ENCODE measurements at regions of chrX and their contacts with region 1.

Region 1: GRCh38 chrX:102950908-102951866 is 14.1 kb downstream of the RAB40AL start:
- DNase-seq: peak; percentile 69
- ATAC-seq: peak; percentile 61
- H3K4me3 Mint-ChIP-seq: peak overlapping the region; percentile 59
- H3K27ac Mint-ChIP-seq: no peak overlapping the region
- H3K4me1 Mint-ChIP-seq: peaks cover 4% of the 10 kb centered on the region
- H3K27me3 Mint-ChIP-seq: peaks cover 4% of the 10 kb centered on the region

Region 2: GRCh38 chrX:102498732-102499131 is 452.5 kb before region 1 on chrX:
- CTCF ChIA-PET with region 1: no interaction called
- POLR2A ChIA-PET with region 1: no interaction called
- intact Hi-C with region 1: no loop called
- DNase-seq: no peak
- ATAC-seq: no peak
- H3K4me3 Mint-ChIP-seq: no peak overlapping the region
- H3K27ac Mint-ChIP-seq: no peak overlapping the region
- H3K4me1 Mint-ChIP-seq: no peaks in the 10 kb centered on the region
- H3K27me3 Mint-ChIP-seq: no peaks in the 10 kb centered on the region

Region 3: DNA sequence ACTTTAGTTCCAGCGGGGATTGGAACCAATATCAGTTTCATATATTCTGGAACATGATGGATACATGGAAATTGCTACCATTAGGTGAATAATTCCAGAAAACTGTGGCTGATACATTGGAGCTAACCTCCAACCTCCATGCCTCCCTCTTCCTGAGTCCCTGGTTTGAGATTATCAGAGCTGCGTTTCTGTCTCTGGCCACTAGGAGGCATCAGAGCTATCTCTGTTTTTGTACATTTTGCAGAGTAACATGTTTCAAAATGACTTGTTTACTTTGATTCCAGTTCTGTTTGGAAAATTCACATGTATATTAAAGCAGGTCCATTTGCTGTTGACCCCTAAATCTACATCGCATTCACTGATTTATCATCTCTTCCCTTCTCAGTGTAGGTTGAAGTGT is 16.6 kb before region 1 on chrX:
- CTCF ChIA-PET with region 1: interaction called, 19 read pairs
- POLR2A ChIA-PET with region 1: no interaction called
- intact Hi-C with region 1: no loop called
- DNase-seq: peak; percentile 51
- ATAC-seq: no peak
- H3K4me3 Mint-ChIP-seq: no peak overlapping the region
- H3K27ac Mint-ChIP-seq: no peak overlapping the region
- H3K4me1 Mint-ChIP-seq: no peaks in the 10 kb centered on the region
- H3K27me3 Mint-ChIP-seq: no peaks in the 10 kb centered on the region

Region 4: DNA sequence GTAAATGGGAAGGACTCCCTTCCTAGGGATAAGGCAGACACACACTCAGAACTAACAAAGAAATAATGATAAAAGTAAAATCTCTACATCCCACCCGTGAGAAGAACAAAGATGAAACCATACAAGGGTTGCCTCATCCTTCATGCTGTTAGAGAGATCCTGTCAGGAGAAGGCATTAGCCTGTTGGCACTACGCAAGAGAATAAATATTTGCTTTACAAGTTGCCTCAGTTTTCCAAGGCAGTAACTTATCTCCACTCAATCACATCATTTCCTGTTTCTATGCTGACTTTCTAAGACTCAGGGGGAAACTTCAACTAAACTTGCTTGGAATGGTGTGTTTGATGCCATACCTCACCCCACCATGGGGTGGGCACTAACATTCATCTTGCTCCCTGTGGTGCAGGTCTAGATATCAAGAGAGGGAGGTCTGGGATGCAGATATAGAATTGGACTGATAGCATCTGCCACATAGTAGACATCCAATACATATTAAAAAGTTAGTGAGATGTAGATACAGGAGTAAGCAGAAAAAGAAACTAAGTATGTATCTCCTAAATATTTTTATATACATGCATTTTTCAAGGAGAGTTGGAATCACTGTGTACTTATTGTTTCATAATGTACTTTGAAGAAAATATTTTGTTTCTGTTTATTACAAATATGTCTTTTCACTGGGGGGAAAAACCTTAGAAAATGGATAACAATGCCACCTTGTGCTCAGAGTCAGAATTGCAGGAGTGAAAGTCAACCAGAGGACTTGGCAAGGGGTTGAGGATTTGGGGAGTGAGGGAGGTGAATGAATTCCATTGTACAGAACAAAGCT is 206.5 kb after region 1 on chrX:
- CTCF ChIA-PET with region 1: no interaction called
- POLR2A ChIA-PET with region 1: no interaction called
- intact Hi-C with region 1: loop called in 1 of 2 experiments (anchors 1 kb)
- DNase-seq: peak; percentile 22
- ATAC-seq: no peak
- H3K4me3 Mint-ChIP-seq: no peak overlapping the region
- H3K27ac Mint-ChIP-seq: no peak overlapping the region
- H3K4me1 Mint-ChIP-seq: no peaks in the 10 kb centered on the region
- H3K27me3 Mint-ChIP-seq: no peaks in the 10 kb centered on the region

Region 5: GRCh38 chrX:103175944-103176753 is 225.0 kb after region 1 on chrX:
- CTCF ChIA-PET with region 1: interaction called, 28 read pairs
- POLR2A ChIA-PET with region 1: no interaction called
- intact Hi-C with region 1: loop called (anchors 1 kb)
- DNase-seq: peak; percentile 69
- ATAC-seq: peak; percentile 58
- H3K4me3 Mint-ChIP-seq: peak overlapping the region; percentile 49
- H3K27ac Mint-ChIP-seq: no peak overlapping the region
- H3K4me1 Mint-ChIP-seq: peaks cover 3% of the 10 kb centered on the region
- H3K27me3 Mint-ChIP-seq: peaks cover 5% of the 10 kb centered on the region

Region 6: DNA sequence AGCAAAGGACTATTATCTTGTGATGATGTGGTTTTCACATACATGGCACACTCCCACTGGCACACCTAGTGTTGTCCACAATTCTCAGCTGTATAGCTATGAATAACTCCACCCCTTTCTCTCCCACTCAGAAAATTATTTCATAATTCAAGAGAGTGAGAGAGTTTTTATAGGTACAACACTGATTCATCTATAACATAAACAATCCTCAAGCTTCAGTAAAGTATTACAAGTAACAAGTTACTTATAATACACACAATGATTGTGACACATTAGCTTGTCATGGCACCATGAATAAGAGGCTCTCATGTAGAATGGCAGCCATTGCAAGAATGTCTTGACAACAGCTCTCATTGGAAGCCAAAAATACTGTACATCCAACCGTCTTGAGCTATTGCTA is 524.2 kb after region 1 on chrX:
- CTCF ChIA-PET with region 1: no interaction called
- POLR2A ChIA-PET with region 1: no interaction called
- intact Hi-C with region 1: loop called in 1 of 2 experiments (anchors 10 kb)
- DNase-seq: no peak
- ATAC-seq: no peak
- H3K4me3 Mint-ChIP-seq: no peak overlapping the region
- H3K27ac Mint-ChIP-seq: no peak overlapping the region
- H3K4me1 Mint-ChIP-seq: no peaks in the 10 kb centered on the region
- H3K27me3 Mint-ChIP-seq: no peaks in the 10 kb centered on the region